ENCODE measurements at regions of chr14 and their contacts with region 1.

Region 1: GRCh38 chr14:64671591-64671990 is 32.6 kb upstream of the PLEKHG3 start:
- H3K4me3 Mint-ChIP-seq: no peak overlapping the region
- H3K27ac Mint-ChIP-seq: no peak overlapping the region
- H3K4me1 Mint-ChIP-seq: peaks cover 33% of the 10 kb centered on the region
- H3K27me3 Mint-ChIP-seq: peaks cover 2% of the 10 kb centered on the region

Region 2: GRCh38 chr14:64708148-64709004 is 36.8 kb after region 1 on chr14:
- intact Hi-C with region 1: loop called (anchors 5 kb)
- H3K4me3 Mint-ChIP-seq: peak overlapping the region; percentile 67
- H3K27ac Mint-ChIP-seq: peak overlapping the region; percentile 93
- H3K4me1 Mint-ChIP-seq: peaks cover 75% of the 10 kb centered on the region
- H3K27me3 Mint-ChIP-seq: peaks cover 6% of the 10 kb centered on the region

Region 3: DNA sequence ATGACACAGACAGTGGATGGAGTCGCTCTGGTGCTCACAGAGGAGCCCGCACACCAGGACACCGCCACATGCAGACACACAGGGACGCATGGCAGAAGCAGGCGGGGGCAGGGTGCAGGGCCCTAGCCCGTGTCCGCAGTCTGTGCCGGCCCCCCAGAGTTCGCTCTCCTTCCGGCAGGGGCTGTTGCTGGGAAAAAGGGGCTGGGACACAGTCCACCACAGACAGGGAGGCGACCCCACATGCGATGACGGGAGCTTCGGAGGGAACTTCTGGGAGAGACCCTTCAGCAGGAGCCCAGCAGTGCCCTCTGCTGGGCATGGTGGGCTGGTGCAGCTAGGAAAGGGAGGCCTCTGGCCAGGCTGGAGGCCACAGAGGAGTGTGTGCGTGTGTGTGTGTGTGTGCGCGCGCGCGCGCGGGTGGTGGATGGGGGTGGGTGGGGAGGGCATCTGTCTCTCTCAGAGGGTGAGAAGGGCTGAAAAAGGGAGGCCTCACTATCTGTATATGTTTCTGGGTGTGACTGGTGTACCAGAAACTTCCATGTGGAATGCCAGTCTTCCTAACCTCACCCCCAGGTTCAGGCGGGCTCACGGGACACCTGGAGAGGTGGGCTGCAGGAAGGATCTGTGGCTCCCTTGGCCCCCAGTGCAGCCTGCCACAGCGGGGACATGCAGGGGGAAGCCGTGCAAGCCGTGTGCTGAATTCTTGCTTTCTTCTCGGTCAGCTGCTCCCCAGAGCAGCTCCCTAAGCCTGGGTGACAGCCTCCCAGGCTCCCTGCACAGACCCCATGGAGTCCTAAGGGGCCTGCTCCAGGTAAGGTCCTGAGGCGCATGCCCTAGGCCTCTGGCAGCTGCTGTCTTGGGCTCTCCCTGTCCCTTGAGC is 93.3 kb after region 1 on chr14:
- intact Hi-C with region 1: loop called (anchors 1 kb)
- H3K4me3 Mint-ChIP-seq: peak overlapping the region; percentile 60
- H3K27ac Mint-ChIP-seq: no peak overlapping the region
- H3K4me1 Mint-ChIP-seq: peaks cover 14% of the 10 kb centered on the region
- H3K27me3 Mint-ChIP-seq: peaks cover 43% of the 10 kb centered on the region

Region 4: GRCh38 chr14:64891839-64892375 is 220.3 kb after region 1 on chr14:
- intact Hi-C with region 1: loop called (anchors 5 kb)
- H3K4me3 Mint-ChIP-seq: no peak overlapping the region
- H3K27ac Mint-ChIP-seq: no peak overlapping the region
- H3K4me1 Mint-ChIP-seq: no peaks in the 10 kb centered on the region
- H3K27me3 Mint-ChIP-seq: peaks cover 14% of the 10 kb centered on the region

Region 5: GRCh38 chr14:64928239-64929013 is 256.8 kb after region 1 on chr14:
- intact Hi-C with region 1: no loop called
- H3K4me3 Mint-ChIP-seq: no peak overlapping the region
- H3K27ac Mint-ChIP-seq: no peak overlapping the region
- H3K4me1 Mint-ChIP-seq: no peaks in the 10 kb centered on the region
- H3K27me3 Mint-ChIP-seq: no peaks in the 10 kb centered on the region

Measured in dendritic cell treated with granulocyte-macrophage colony-stimulating factor and Interleukin-4, amounts not matched to agents 40 ng/mL and 50 ng/mL, for 4 days (primary cell).